ENCODE measurements at regions of chr3 and their contacts with region 1.

Region 1: GRCh38 chr3:37308247-37308646 is 133.9 kb upstream of the LRRFIP2 start:
- DNase-seq: peak in 4 of 5 donors; percentile 1 to 12 (median 5)
- H3K4me3 ChIP-seq: no peak overlapping the region
- H3K4me3 Mint-ChIP-seq: no peak overlapping the region
- H3K27ac ChIP-seq: no peak overlapping the region
- H3K27ac Mint-ChIP-seq: no peak overlapping the region
- H3K4me1 ChIP-seq: peaks cover 13% of the 10 kb centered on the region
- H3K4me1 Mint-ChIP-seq: peaks cover 13 to 28% (median 19%) of the 10 kb centered on the region in 4 donors
- H3K27me3 ChIP-seq: no peaks in the 10 kb centered on the region
- H3K27me3 Mint-ChIP-seq: no peaks in the 10 kb centered on the region

Region 2: GRCh38 chr3:37320276-37320675 is 12.0 kb after region 1 on chr3:
- CTCF ChIA-PET with region 1: interaction called, 10 read pairs
- POLR2A ChIA-PET with region 1: no interaction called
- intact Hi-C with region 1: no loop called
- DNase-seq: no peak
- H3K4me3 ChIP-seq: no peak overlapping the region
- H3K4me3 Mint-ChIP-seq: peak overlapping the region in 1 of 8 donors; percentile 40
- H3K27ac ChIP-seq: no peak overlapping the region
- H3K27ac Mint-ChIP-seq: peak overlapping the region in 3 of 7 donors; percentile 16 to 86 (median 57)
- H3K4me1 ChIP-seq: peaks cover 6% of the 10 kb centered on the region
- H3K4me1 Mint-ChIP-seq: peaks cover 7 to 28% (median 20%) of the 10 kb centered on the region in 4 donors
- H3K27me3 ChIP-seq: no peaks in the 10 kb centered on the region
- H3K27me3 Mint-ChIP-seq: no peaks in the 10 kb centered on the region